MCF 10A (cell line): ENCODE measurements at regions of chr3 and their contacts with region 1.

Region 1: DNA sequence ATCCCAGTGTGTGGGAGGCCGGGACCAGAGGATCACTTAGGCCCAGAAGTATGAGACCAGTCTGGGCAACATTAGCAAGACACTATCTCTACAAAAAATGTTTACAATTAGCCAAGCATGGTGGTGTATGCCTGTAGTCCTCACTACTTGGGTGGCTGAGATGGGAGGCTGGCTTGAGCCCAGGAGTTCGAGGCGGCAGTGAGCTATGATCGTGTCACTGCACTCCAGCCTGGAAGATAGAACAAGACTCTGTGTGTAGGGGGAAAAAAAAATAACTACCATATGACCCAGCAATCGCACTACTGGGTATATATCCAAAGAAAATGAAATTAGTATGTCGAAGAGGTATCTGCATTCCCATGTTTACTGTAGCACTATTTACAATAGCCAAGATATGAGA is 22.6 kb downstream of the RYK start:
- DNase-seq: no peak
- H3K4me3 Mint-ChIP-seq: no peak overlapping the region
- H3K27ac Mint-ChIP-seq: no peak overlapping the region
- H3K4me1 Mint-ChIP-seq: peaks cover 33% of the 10 kb centered on the region
- H3K27me3 Mint-ChIP-seq: no peaks in the 10 kb centered on the region
- CTCF ChIP-seq: no peak

Region 2: GRCh38 chr3:133943639-133944141 is 284.3 kb before region 1 on chr3:
- CTCF ChIA-PET with region 1: no interaction called
- POLR2A ChIA-PET with region 1: no interaction called
- intact Hi-C with region 1: no loop called
- DNase-seq: peak; percentile 92
- H3K4me3 Mint-ChIP-seq: peak overlapping the region; percentile 39
- H3K27ac Mint-ChIP-seq: peak overlapping the region; percentile 52
- H3K4me1 Mint-ChIP-seq: peaks cover 55% of the 10 kb centered on the region
- H3K27me3 Mint-ChIP-seq: no peaks in the 10 kb centered on the region
- CTCF ChIP-seq: no peak

Region 3: DNA sequence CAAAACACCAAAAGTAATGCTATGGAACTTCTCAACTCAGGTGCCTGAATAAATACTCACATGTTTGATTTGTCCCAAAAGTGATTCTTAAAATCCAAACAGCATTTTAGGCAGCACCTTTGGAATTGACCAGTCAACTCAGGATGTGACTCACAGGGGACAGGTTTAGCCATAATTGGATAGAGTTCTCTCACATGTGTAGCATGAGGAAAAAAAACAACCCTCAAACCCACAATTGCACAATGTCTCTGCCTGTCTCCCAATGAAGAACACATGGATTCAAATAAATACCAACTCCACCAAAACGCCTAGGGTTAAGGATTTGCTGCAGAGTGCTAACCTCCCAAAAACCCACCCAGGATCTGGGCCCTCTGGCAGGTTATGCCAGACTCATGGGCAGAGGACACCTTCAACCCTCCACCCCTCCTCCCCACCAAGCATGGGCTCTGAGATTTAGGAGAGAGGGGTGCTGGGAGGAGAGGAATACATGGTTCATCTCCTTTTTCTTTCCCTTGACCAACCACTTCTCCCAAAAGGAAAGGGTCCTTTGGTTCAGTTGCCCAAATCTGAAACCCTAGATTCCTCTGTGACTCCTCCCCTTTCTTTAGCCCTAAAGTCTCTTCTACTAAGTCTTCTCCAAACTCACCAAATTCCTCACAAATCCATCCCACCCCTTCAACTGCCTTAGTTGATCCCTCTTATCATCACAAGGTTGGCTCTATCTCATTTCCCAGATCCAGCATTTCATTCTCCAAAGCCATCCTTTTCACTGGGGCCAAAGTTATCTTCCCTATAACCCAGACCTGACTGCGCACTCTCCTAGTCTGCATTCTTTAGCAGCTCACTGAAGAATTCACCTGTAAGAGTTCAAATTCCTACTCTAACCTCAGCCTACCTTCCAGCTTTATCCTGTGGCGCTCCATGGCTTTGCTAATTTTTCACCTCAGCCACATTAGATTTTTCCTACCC is 14.9 kb after region 1 on chr3:
- CTCF ChIA-PET with region 1: interaction called, 113 read pairs
- POLR2A ChIA-PET with region 1: interaction called, 33 read pairs
- intact Hi-C with region 1: no loop called
- DNase-seq: peak; percentile 95
- H3K4me3 Mint-ChIP-seq: peak overlapping the region; percentile 41
- H3K27ac Mint-ChIP-seq: peak overlapping the region; percentile 96
- H3K4me1 Mint-ChIP-seq: peaks cover 65% of the 10 kb centered on the region
- H3K27me3 Mint-ChIP-seq: no peaks in the 10 kb centered on the region
- CTCF ChIP-seq: no peak

Region 4: GRCh38 chr3:134409041-134409440 is 181.0 kb after region 1 on chr3:
- CTCF ChIA-PET with region 1: no interaction called
- POLR2A ChIA-PET with region 1: no interaction called
- intact Hi-C with region 1: no loop called
- DNase-seq: no peak
- H3K4me3 Mint-ChIP-seq: no peak overlapping the region
- H3K27ac Mint-ChIP-seq: no peak overlapping the region
- H3K4me1 Mint-ChIP-seq: no peaks in the 10 kb centered on the region
- H3K27me3 Mint-ChIP-seq: no peaks in the 10 kb centered on the region
- CTCF ChIP-seq: no peak